Activated CD4-positive, alpha-beta memory T cell treated with anti-CD3 and anti-CD28 coated beads, Interleukin-2, amount 10 ng/mL, durations not matched to agents 7 days and 5 days (primary cell): ENCODE measurements at regions of chr11 and their contacts with region 1.

Region 1: DNA sequence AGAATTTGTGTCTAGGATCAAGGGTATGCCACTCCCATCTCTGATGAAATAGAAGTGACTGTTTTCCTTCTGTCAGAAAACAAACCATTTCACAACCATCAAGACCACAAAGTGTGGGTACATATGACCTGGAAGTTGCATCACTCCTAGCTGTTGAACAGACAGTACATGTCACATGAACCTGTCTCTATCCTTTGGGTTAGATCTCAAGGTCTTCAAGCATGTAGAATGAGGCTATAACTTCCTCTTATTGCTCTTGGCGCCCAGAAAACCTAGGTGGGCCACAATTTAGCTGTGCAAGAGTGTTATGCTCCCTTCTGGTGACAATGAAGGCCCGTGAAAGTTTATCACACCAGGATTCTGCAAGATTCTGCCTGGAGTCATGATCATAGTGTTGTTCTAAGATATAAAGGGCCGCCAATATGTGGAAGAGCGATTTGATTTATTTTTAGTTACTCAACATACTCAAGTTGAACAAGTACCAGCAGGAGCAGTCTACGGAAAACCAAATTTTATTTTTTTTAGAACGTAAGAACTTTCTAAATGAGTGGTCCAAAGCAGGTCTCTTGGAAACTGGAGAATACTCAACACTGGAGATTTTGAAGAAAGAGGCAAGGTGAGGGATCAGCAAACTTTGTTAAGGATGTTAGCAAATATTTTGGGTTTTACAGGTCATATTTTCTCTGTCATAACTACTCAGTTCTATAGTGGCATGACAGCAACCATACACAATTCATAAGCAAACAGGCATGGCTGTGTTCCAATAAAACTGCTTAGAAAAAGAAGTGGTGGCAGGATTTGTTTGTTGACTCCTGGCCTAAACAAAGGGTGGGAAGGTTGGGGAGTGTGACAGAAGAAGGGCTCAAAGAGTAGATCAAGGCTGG is 101.8 kb downstream of the USP35 start:
- DNase-seq: peak; percentile 41
- H3K4me3 Mint-ChIP-seq: no peak overlapping the region
- H3K27ac Mint-ChIP-seq: peak overlapping the region; percentile 93
- H3K4me1 Mint-ChIP-seq: peaks cover 57% of the 10 kb centered on the region
- H3K27me3 Mint-ChIP-seq: no peaks in the 10 kb centered on the region

Region 2: DNA sequence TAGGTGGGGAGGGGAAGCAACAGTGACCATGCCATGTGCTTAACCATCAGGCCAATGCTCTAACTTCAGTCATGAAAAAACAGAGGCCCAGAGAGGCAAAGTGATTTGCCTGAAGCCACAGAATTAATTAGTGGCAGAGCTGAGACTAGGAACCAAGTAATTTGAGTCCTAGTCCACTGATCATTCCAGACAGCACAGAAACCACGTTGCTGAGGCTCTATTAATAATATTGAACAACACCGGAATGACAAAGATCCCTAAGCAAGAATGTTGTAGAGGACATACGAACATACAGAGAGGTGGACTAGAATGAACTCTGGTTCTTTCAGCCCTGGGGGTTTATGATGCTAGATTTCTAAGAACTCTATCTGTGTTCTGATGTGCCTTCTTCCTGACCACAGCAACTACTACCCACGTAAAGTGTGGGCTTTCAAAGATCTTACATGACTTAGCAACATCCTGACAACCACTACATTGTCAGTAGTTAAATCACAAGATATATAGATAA is 34.8 kb after region 1 on chr11:
- CTCF ChIA-PET with region 1: interaction called, 7 read pairs
- POLR2A ChIA-PET with region 1: interaction called, 75 read pairs
- DNase-seq: peak; percentile 44
- H3K4me3 Mint-ChIP-seq: no peak overlapping the region
- H3K27ac Mint-ChIP-seq: peak overlapping the region; percentile 93
- H3K4me1 Mint-ChIP-seq: peaks cover 87% of the 10 kb centered on the region
- H3K27me3 Mint-ChIP-seq: no peaks in the 10 kb centered on the region

Region 3: DNA sequence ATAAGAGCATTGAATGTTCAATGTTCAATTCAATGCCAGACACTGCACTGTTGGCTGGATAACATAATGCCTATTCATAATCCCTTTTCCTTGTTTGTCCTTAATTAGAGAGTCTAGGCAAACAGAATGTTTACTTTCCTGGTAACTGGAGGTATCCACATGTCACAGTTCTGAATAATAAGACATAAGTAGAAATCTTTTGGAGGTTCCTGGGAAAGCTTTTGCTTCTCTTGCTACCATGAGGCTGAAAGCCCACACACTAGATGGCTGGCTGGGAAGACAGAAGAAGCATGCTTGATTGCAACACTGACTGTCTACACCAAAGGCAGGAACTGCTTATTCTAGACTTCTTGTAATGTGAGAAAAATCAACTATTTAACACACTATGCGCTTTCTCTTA is 47.6 kb after region 1 on chr11:
- CTCF ChIA-PET with region 1: interaction called, 3 read pairs
- POLR2A ChIA-PET with region 1: interaction called, 34 read pairs
- DNase-seq: no peak
- H3K4me3 Mint-ChIP-seq: no peak overlapping the region
- H3K27ac Mint-ChIP-seq: peak overlapping the region; percentile 89
- H3K4me1 Mint-ChIP-seq: peaks cover 88% of the 10 kb centered on the region
- H3K27me3 Mint-ChIP-seq: no peaks in the 10 kb centered on the region

Region 4: DNA sequence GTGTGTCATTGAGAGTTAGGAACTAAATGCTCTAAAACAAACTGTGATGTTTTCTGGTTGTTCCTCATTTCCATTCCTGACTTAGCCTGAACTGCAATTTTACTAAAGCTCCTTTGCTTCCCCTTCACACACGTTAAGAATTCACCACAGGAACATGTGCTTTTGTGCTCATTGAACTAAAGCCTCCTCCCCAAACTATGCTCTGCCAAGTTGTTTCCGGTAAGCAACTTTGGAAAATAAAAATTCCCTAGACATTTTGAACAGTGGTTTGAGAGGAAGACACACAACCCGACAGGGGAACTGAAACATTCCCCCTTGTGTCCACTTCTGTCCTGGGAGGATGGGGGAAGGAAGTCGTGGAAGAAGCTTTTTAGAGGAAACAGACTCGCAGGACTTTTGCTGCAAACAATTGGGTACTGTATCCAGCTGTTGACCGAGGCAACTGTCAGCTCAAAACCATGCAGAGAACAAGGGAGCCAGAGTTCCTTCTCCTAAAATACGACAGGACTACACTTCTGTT is 60.2 kb after region 1 on chr11:
- CTCF ChIA-PET with region 1: no interaction called
- POLR2A ChIA-PET with region 1: interaction called, 21 read pairs
- DNase-seq: no peak
- H3K4me3 Mint-ChIP-seq: no peak overlapping the region
- H3K27ac Mint-ChIP-seq: peak overlapping the region; percentile 76
- H3K4me1 Mint-ChIP-seq: peaks cover 64% of the 10 kb centered on the region
- H3K27me3 Mint-ChIP-seq: no peaks in the 10 kb centered on the region

Region 5: GRCh38 chr11:78361228-78361627 is 70.7 kb after region 1 on chr11:
- CTCF ChIA-PET with region 1: no interaction called
- POLR2A ChIA-PET with region 1: no interaction called
- DNase-seq: no peak
- H3K4me3 Mint-ChIP-seq: no peak overlapping the region
- H3K27ac Mint-ChIP-seq: no peak overlapping the region
- H3K4me1 Mint-ChIP-seq: peaks cover 24% of the 10 kb centered on the region
- H3K27me3 Mint-ChIP-seq: no peaks in the 10 kb centered on the region

Region 6: GRCh38 chr11:78397387-78397786 is 106.9 kb after region 1 on chr11:
- CTCF ChIA-PET with region 1: no interaction called
- POLR2A ChIA-PET with region 1: interaction called, 13 read pairs
- DNase-seq: peak; percentile 33
- H3K4me3 Mint-ChIP-seq: no peak overlapping the region
- H3K27ac Mint-ChIP-seq: peak overlapping the region; percentile 29
- H3K4me1 Mint-ChIP-seq: peaks cover 42% of the 10 kb centered on the region
- H3K27me3 Mint-ChIP-seq: no peaks in the 10 kb centered on the region

Region 7: GRCh38 chr11:78424334-78425270 is 134.1 kb after region 1 on chr11:
- CTCF ChIA-PET with region 1: no interaction called
- POLR2A ChIA-PET with region 1: no interaction called
- DNase-seq: no peak
- H3K4me3 Mint-ChIP-seq: peak overlapping the region; percentile 60
- H3K27ac Mint-ChIP-seq: peak overlapping the region; percentile 90
- H3K4me1 Mint-ChIP-seq: peaks cover 69% of the 10 kb centered on the region
- H3K27me3 Mint-ChIP-seq: peaks cover 2% of the 10 kb centered on the region